Activated CD4-positive, alpha-beta T cell treated with anti-CD3 and anti-CD28 coated beads for 36 hours (primary cell): ENCODE measurements at regions of chrX and their contacts with region 1.

Region 1: GRCh38 chrX:47217642-47218279 is 720 bp upstream of the CDK16 start:
- DNase-seq: peak; percentile 96
- ATAC-seq: peak; percentile 87
- H3K4me3 Mint-ChIP-seq: peak overlapping the region; percentile 92
- H3K27ac Mint-ChIP-seq: peak overlapping the region; percentile 99
- H3K4me1 Mint-ChIP-seq: peaks cover 35% of the 10 kb centered on the region
- H3K27me3 Mint-ChIP-seq: no peaks in the 10 kb centered on the region

Region 2: GRCh38 chrX:46531442-46531841 is 686.3 kb before region 1 on chrX:
- CTCF ChIA-PET with region 1: no interaction called
- POLR2A ChIA-PET with region 1: no interaction called
- intact Hi-C with region 1: no loop called
- DNase-seq: no peak
- ATAC-seq: no peak
- H3K4me3 Mint-ChIP-seq: no peak overlapping the region
- H3K27ac Mint-ChIP-seq: no peak overlapping the region
- H3K4me1 Mint-ChIP-seq: no peaks in the 10 kb centered on the region
- H3K27me3 Mint-ChIP-seq: no peaks in the 10 kb centered on the region

Region 3: GRCh38 chrX:47097018-47097417 is 120.7 kb before region 1 on chrX:
- CTCF ChIA-PET with region 1: no interaction called
- POLR2A ChIA-PET with region 1: no interaction called
- intact Hi-C with region 1: no loop called
- DNase-seq: no peak
- ATAC-seq: no peak
- H3K4me3 Mint-ChIP-seq: no peak overlapping the region
- H3K27ac Mint-ChIP-seq: no peak overlapping the region
- H3K4me1 Mint-ChIP-seq: no peaks in the 10 kb centered on the region
- H3K27me3 Mint-ChIP-seq: no peaks in the 10 kb centered on the region

Region 4: GRCh38 chrX:47144626-47145394 is 73.0 kb before region 1 on chrX and contains the starts of genes NDUFB11 and RBM10:
- CTCF ChIA-PET with region 1: no interaction called
- POLR2A ChIA-PET with region 1: interaction called, 9 read pairs
- intact Hi-C with region 1: loop called (anchors 1 to 2 kb)
- DNase-seq: peak; percentile 94
- ATAC-seq: peak; percentile 93
- H3K4me3 Mint-ChIP-seq: peak within 1 kb of the TSS; percentile 98
- H3K27ac Mint-ChIP-seq: peak within 1 kb of the TSS; percentile 100
- H3K4me1 Mint-ChIP-seq: peaks cover 24% of the 10 kb centered on the region
- H3K27me3 Mint-ChIP-seq: no peaks in the 10 kb centered on the region
- total RNA-seq, gene NDUFB11: 89.9 to 90.8 TPM
- total RNA-seq, gene RBM10: 63.8 to 72.1 TPM

Region 5: DNA sequence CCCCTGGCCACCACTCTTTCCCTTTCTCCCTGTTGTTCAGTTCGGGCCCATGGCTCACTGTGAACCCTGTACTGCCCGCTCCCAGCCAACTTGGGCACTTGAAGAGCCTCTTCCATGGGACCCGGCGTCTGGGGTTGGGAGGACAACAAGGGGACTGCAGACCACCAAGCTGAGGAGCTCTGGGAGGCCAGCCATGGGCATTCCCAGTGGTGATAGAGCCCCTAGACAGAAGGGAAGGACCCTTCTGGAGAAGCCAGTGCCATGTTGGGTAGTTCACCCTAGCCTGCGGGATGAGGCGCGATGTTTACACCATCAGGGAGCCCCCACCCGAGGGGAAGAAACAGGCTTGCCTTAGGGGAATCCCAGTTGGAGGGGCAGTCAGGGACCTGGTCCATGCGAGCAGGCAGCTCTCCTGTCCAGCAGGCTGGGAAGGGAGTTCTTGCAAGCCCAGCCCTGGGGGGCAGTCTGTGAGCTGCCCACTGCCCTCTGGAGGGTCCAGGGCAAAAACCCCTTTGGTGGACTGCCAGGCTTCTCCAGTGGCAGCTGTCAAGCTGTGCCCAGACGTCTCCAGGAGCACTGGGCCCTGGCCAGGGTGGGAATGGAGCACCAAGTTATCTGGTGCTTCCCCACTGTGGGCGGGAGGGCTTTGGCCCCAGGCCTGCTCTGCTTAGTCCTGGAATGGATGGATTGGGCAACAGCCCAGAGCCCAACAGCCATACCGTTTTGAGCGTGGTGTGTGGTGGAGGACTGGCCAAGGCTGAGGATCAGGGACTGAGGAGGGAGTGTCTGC is 47.8 kb before region 1 on chrX:
- CTCF ChIA-PET with region 1: no interaction called
- POLR2A ChIA-PET with region 1: no interaction called
- intact Hi-C with region 1: no loop called
- DNase-seq: no peak
- ATAC-seq: no peak
- H3K4me3 Mint-ChIP-seq: no peak overlapping the region
- H3K27ac Mint-ChIP-seq: no peak overlapping the region
- H3K4me1 Mint-ChIP-seq: peaks cover 2% of the 10 kb centered on the region
- H3K27me3 Mint-ChIP-seq: no peaks in the 10 kb centered on the region

Region 6: DNA sequence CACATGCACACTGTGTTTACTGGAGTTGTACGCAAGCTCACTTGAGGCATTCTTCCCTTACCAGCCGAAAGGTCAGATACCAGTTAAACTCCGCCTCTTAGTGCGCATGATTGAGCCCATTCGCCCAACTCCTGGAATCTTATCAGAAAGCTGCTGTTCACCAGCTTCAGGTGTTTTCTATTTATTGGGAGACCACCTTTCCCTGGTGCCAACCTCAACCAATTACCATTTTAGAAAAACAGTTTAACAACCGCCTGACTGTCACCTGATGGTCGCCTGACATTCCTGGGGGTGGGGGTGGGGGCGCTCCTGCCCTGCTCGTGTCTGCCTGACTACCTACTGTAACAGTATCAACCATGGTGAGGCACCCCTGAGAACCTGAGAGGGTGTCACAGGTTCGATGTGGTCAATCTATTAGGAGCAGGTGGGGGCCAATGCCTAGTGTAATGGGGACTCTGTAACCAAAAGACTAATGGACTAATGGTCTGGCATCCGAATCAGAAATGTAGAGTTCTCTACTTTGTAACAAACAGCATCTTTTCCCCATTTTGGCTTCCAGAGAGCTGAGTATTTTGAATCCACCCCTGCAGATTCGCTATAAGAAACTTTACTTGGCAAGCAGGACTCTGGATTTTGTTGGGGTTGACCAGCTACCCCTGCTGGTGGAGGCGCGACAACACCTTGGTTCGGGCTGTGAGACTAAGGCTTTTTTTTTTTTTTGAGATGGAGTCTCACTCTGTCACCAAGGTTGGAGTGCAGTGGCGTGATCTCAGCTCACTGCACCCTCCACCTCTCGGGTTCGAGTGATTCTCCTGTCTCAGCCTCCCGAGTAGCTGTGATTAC is 94.4 kb after region 1 on chrX:
- CTCF ChIA-PET with region 1: no interaction called
- POLR2A ChIA-PET with region 1: interaction called, 4 read pairs
- intact Hi-C with region 1: loop called in 1 of 2 experiments (anchors 1 kb)
- DNase-seq: peak; percentile 74
- ATAC-seq: peak; percentile 98
- H3K4me3 Mint-ChIP-seq: no peak overlapping the region
- H3K27ac Mint-ChIP-seq: no peak overlapping the region
- H3K4me1 Mint-ChIP-seq: peaks cover 3% of the 10 kb centered on the region
- H3K27me3 Mint-ChIP-seq: no peaks in the 10 kb centered on the region

Region 7: GRCh38 chrX:47384502-47384901 is 166.7 kb after region 1 on chrX:
- CTCF ChIA-PET with region 1: no interaction called
- POLR2A ChIA-PET with region 1: no interaction called
- intact Hi-C with region 1: loop called (anchors 5 kb)
- DNase-seq: peak; percentile 77
- ATAC-seq: peak; percentile 75
- H3K4me3 Mint-ChIP-seq: no peak overlapping the region
- H3K27ac Mint-ChIP-seq: no peak overlapping the region
- H3K4me1 Mint-ChIP-seq: peaks cover 18% of the 10 kb centered on the region
- H3K27me3 Mint-ChIP-seq: no peaks in the 10 kb centered on the region

Region 8: GRCh38 chrX:47523297-47523696 is 305.5 kb after region 1 on chrX:
- CTCF ChIA-PET with region 1: no interaction called
- POLR2A ChIA-PET with region 1: no interaction called
- intact Hi-C with region 1: loop called in 1 of 2 experiments (anchors 1 kb)
- DNase-seq: peak; percentile 88
- ATAC-seq: peak; percentile 99
- H3K4me3 Mint-ChIP-seq: peak overlapping the region; percentile 60
- H3K27ac Mint-ChIP-seq: no peak overlapping the region
- H3K4me1 Mint-ChIP-seq: no peaks in the 10 kb centered on the region
- H3K27me3 Mint-ChIP-seq: no peaks in the 10 kb centered on the region

Region 9: GRCh38 chrX:47658684-47659515 is 441.1 kb after region 1 on chrX and contains the start of gene UXT:
- CTCF ChIA-PET with region 1: no interaction called
- POLR2A ChIA-PET with region 1: no interaction called
- intact Hi-C with region 1: loop called (anchors 1 to 5 kb)
- DNase-seq: peak; percentile 96
- ATAC-seq: peak; percentile 83
- H3K4me3 Mint-ChIP-seq: peak within 1 kb of the TSS; percentile 86
- H3K27ac Mint-ChIP-seq: peak within 1 kb of the TSS; percentile 94
- H3K4me1 Mint-ChIP-seq: peaks cover 52% of the 10 kb centered on the region
- H3K27me3 Mint-ChIP-seq: no peaks in the 10 kb centered on the region
- total RNA-seq, gene UXT: 195 to 210 TPM